HepG2 (cell line): ENCODE measurements at regions of chr9 and their contacts with region 1.

Region 1: DNA sequence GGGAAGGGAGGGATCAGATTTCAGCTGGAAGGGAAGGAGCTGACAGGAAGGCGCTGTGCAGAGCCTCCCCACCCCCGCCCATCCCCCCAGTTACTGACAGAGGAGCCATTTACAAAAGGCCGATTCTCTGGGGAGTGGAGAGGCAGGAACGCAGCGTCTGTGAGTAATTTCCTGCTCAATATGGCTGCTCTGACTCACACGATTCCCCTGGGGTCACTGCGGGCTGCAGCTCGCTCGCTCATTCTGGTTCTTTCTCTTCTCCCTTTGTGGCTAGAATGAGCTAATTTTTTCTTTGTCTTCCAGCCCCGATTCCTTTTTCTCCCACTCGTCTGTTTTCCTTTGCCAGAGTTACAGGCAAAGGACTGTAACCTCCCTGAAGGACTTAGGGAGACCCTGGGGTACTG is 28.8 kb downstream of the PTPA start:
- DNase-seq: peak; percentile 94
- ATAC-seq: peak; percentile 81
- H3K4me3 ChIP-seq: peak overlapping the region; percentile 57 to 75 (median 67)
- H3K27ac ChIP-seq: peak overlapping the region; percentile 98
- H3K4me1 ChIP-seq: peaks cover 51% of the 10 kb centered on the region
- H3K27me3 ChIP-seq: no peaks in the 10 kb centered on the region
- CTCF ChIP-seq: no peak
- EP300 ChIP-seq: peak in 1 of 2 experiments; percentile 63; a peak in 2 of 4 replicates
- POLR2A ChIP-seq: peak; percentile 75 to 78
- RAD21 ChIP-seq: no peak

Region 2: GRCh38 chr9:129166623-129167557 is 26.9 kb after region 1 on chr9:
- CTCF ChIA-PET with region 1: no interaction called
- POLR2A ChIA-PET with region 1: interaction called, 17 read pairs
- in situ Hi-C with region 1: no loop called
- intact Hi-C with region 1: no loop called
- DNase-seq: peak; percentile 58
- ATAC-seq: peak; percentile 66
- H3K4me3 ChIP-seq: peak overlapping the region; percentile 32 to 50 (median 47); a peak in 5 of 6 replicates
- H3K27ac ChIP-seq: no peak overlapping the region
- H3K4me1 ChIP-seq: peaks cover 82% of the 10 kb centered on the region
- H3K27me3 ChIP-seq: peaks cover under 1 to 11% of the 10 kb centered on the region in 2 experiments; a peak in 4 of 5 replicates
- CTCF ChIP-seq: no peak
- EP300 ChIP-seq: no peak
- POLR2A ChIP-seq: no peak
- RAD21 ChIP-seq: no peak

Region 3: GRCh38 chr9:129626079-129626624 is 486.2 kb after region 1 on chr9 and contains the start of gene NTMT1:
- CTCF ChIA-PET with region 1: interaction called, 17 read pairs
- POLR2A ChIA-PET with region 1: interaction called, 50 read pairs
- in situ Hi-C with region 1: loop called (anchors 5 kb)
- intact Hi-C with region 1: loop called (anchors 1 kb)
- DNase-seq: peak; percentile 58
- ATAC-seq: peak; percentile 67
- H3K4me3 ChIP-seq: peak within 1 kb of the TSS; percentile 69 to 89 (median 85)
- H3K27ac ChIP-seq: peak within 1 kb of the TSS; percentile 95
- H3K4me1 ChIP-seq: peaks cover 72% of the 10 kb centered on the region
- H3K27me3 ChIP-seq: peaks cover 0 to 9% of the 10 kb centered on the region in 2 experiments; a peak in 2 of 5 replicates
- CTCF ChIP-seq: peak; percentile 14
- EP300 ChIP-seq: no peak
- POLR2A ChIP-seq: peak; percentile 82 to 95
- RAD21 ChIP-seq: peak; percentile 54; the same call in 1 of the 2 replicates
- total RNA-seq, gene NTMT1: 51.0 and 53.8 TPM in 2 replicates